ENCODE measurements at regions of chr6 and their contacts with region 1.

Region 1: GRCh38 chr6:139708337-139709199 is 334.1 kb upstream of the CITED2 start:
- DNase-seq: peak; percentile 64 to 76
- H3K4me3 ChIP-seq: no peak overlapping the region
- H3K4me3 Mint-ChIP-seq: peak overlapping the region; percentile 54
- H3K27ac Mint-ChIP-seq: peak overlapping the region; percentile 72
- H3K4me1 ChIP-seq: peaks cover 38% of the 10 kb centered on the region
- H3K4me1 Mint-ChIP-seq: peaks cover 12% of the 10 kb centered on the region
- H3K27me3 ChIP-seq: no peaks in the 10 kb centered on the region
- H3K27me3 Mint-ChIP-seq: no peaks in the 10 kb centered on the region
- CTCF ChIP-seq: no peak

Region 2: GRCh38 chr6:139369568-139370282 is 338.8 kb before region 1 on chr6:
- CTCF ChIA-PET with region 1: interaction called, 11 read pairs
- POLR2A ChIA-PET with region 1: interaction called, 19 read pairs
- intact Hi-C with region 1: loop called (anchors 2 kb)
- DNase-seq: peak in 1 of 2 experiments; percentile 46
- H3K4me3 ChIP-seq: no peak overlapping the region
- H3K4me3 Mint-ChIP-seq: peak overlapping the region; percentile 48
- H3K27ac Mint-ChIP-seq: peak overlapping the region; percentile 61
- H3K4me1 ChIP-seq: peaks cover 45% of the 10 kb centered on the region
- H3K4me1 Mint-ChIP-seq: peaks cover 22% of the 10 kb centered on the region
- H3K27me3 ChIP-seq: no peaks in the 10 kb centered on the region
- H3K27me3 Mint-ChIP-seq: no peaks in the 10 kb centered on the region
- CTCF ChIP-seq: peak; percentile 62 to 64

Region 3: GRCh38 chr6:139597771-139598755 is 110.5 kb before region 1 on chr6:
- CTCF ChIA-PET with region 1: no interaction called
- POLR2A ChIA-PET with region 1: no interaction called
- intact Hi-C with region 1: loop called (anchors 5 kb)
- DNase-seq: peak; percentile 78 to 81
- H3K4me3 ChIP-seq: no peak overlapping the region
- H3K4me3 Mint-ChIP-seq: peak overlapping the region; percentile 59
- H3K27ac Mint-ChIP-seq: peak overlapping the region; percentile 94
- H3K4me1 ChIP-seq: peaks cover 39% of the 10 kb centered on the region
- H3K4me1 Mint-ChIP-seq: peaks cover 31% of the 10 kb centered on the region
- H3K27me3 ChIP-seq: no peaks in the 10 kb centered on the region
- H3K27me3 Mint-ChIP-seq: no peaks in the 10 kb centered on the region
- CTCF ChIP-seq: no peak

Region 4: DNA sequence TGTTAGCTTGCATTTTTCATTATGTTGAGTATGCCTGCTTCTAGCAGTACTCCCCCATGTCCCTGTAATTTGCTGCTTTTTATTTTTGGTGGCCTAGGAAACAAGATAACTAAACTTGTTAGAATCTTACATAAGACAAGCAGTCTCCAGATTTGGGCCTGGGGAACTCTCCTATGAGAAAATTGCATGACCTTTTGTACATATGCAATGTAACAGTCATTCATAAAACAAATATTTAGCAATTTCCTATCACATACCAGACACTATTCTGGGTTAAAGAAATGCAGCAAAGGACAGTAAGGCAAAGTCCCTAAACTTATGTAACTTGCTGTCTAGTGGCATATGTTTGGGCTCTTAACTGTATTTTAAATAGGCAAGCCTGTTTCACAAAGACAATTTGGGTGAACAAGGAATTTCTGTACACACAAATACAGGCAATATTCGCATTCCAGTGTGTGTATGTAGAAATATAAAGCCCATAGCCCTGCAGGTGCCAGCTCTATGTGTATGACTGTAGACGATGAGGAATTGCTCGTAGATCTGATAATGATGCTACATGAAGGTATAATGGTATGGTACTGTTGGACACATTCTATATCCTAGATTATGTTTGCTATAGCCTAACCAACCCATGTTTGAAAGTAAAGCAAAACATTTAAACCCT is 28.9 kb before region 1 on chr6:
- CTCF ChIA-PET with region 1: no interaction called
- POLR2A ChIA-PET with region 1: no interaction called
- intact Hi-C with region 1: loop called (anchors 1 kb)
- DNase-seq: peak in 1 of 2 experiments; percentile 27
- H3K4me3 ChIP-seq: no peak overlapping the region
- H3K4me3 Mint-ChIP-seq: no peak overlapping the region
- H3K27ac Mint-ChIP-seq: peak overlapping the region; percentile 64
- H3K4me1 ChIP-seq: peaks cover 23% of the 10 kb centered on the region
- H3K4me1 Mint-ChIP-seq: peaks cover 6% of the 10 kb centered on the region
- H3K27me3 ChIP-seq: no peaks in the 10 kb centered on the region
- H3K27me3 Mint-ChIP-seq: no peaks in the 10 kb centered on the region
- CTCF ChIP-seq: no peak

Region 5: GRCh38 chr6:139690007-139690406 is 18.6 kb before region 1 on chr6:
- CTCF ChIA-PET with region 1: no interaction called
- POLR2A ChIA-PET with region 1: no interaction called
- intact Hi-C with region 1: no loop called
- DNase-seq: no peak
- H3K4me3 ChIP-seq: no peak overlapping the region
- H3K4me3 Mint-ChIP-seq: no peak overlapping the region
- H3K27ac Mint-ChIP-seq: no peak overlapping the region
- H3K4me1 ChIP-seq: peaks cover 4% of the 10 kb centered on the region; the same call in 1 of the 2 replicates
- H3K4me1 Mint-ChIP-seq: no peaks in the 10 kb centered on the region
- H3K27me3 ChIP-seq: no peaks in the 10 kb centered on the region
- H3K27me3 Mint-ChIP-seq: no peaks in the 10 kb centered on the region
- CTCF ChIP-seq: no peak

Region 6: GRCh38 chr6:139846538-139847456 is 138.2 kb after region 1 on chr6:
- CTCF ChIA-PET with region 1: no interaction called
- POLR2A ChIA-PET with region 1: no interaction called
- intact Hi-C with region 1: no loop called
- DNase-seq: peak; percentile 62 to 65
- H3K4me3 ChIP-seq: no peak overlapping the region
- H3K4me3 Mint-ChIP-seq: peak overlapping the region; percentile 8
- H3K27ac Mint-ChIP-seq: peak overlapping the region; percentile 29
- H3K4me1 ChIP-seq: peaks cover 27% of the 10 kb centered on the region
- H3K4me1 Mint-ChIP-seq: peaks cover 20% of the 10 kb centered on the region
- H3K27me3 ChIP-seq: no peaks in the 10 kb centered on the region
- H3K27me3 Mint-ChIP-seq: no peaks in the 10 kb centered on the region
- CTCF ChIP-seq: no peak

Measured in Caco-2 (cell line).